Tibial artery (tissue), 4 donors: ENCODE measurements at regions of chr11 and their contacts with region 1.

Region 1: GRCh38 chr11:111229604-111230003 is 15.9 kb upstream of the POU2AF2 start:
- DNase-seq: no peak
- H3K4me3 ChIP-seq: no peak overlapping the region
- H3K27ac ChIP-seq: no peak overlapping the region
- H3K4me1 ChIP-seq: peaks cover 0 to 9% (median 0%) of the 10 kb centered on the region in 4 donors
- H3K27me3 ChIP-seq: no peaks in the 10 kb centered on the region
- CTCF ChIP-seq: no peak

Region 2: GRCh38 chr11:110711776-110712658 is 517.6 kb before region 1 on chr11 and contains the start of gene ARHGAP20:
- intact Hi-C with region 1: loop called (anchors 5 kb)
- DNase-seq: peak; percentile 69 to 83
- H3K4me3 ChIP-seq: peak within 1 kb of the TSS; percentile 60 to 67
- H3K27ac ChIP-seq: peak within 1 kb of the TSS; percentile 66 to 68
- H3K4me1 ChIP-seq: peaks cover 0 to 31% (median 20%) of the 10 kb centered on the region in 4 donors
- H3K27me3 ChIP-seq: no peaks in the 10 kb centered on the region
- CTCF ChIP-seq: no peak

Region 3: DNA sequence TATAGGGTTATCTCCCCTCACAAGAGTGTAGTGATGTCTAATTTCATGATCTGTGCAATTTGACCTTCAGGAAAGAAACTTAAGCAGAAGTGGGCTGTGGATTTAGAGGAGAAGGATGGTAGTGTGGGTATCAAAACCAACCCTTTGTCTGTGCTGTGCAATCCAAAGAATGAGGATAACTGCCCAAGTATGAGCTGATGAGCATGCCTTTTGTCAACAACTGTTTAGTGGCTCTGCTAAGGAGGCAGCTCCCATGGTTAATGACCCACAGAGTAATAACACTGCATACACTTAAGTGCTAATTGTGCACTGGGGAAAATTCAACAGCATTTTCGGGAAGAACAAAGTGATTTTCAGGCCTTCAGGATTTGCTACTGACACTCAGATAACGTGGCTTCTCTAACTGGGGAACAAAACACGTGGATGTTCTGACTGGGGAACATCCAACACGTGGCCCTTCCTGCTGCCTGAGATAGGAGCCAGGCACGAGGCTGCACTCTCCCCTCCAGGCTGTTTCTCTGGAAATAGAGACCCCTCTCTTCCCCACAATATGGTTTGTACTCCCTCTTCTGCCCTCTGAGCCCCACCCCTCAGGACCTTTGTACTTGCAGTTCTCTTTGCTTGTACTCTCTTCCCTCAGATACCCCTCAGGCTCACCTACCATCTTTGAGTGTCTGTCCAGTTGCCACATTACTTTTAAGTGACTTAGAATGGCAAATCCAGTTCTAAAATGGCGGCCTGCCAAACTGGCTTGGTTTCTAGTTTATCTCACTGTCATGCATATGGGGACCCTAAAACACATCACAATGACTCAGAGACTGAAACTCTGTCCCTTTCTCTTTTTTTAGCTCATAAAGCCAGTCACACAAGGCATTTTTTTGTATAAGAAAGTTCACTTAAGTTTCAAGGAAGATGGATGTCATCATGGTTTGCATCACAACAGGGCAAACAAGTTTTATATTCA is 218.9 kb before region 1 on chr11:
- intact Hi-C with region 1: no loop called
- DNase-seq: no peak
- H3K4me3 ChIP-seq: no peak overlapping the region
- H3K27ac ChIP-seq: no peak overlapping the region
- H3K4me1 ChIP-seq: no peaks in the 10 kb centered on the region
- H3K27me3 ChIP-seq: no peaks in the 10 kb centered on the region
- CTCF ChIP-seq: no peak

Region 4: GRCh38 chr11:111148953-111149352 is 80.7 kb before region 1 on chr11:
- intact Hi-C with region 1: no loop called
- DNase-seq: no peak
- H3K4me3 ChIP-seq: no peak overlapping the region
- H3K27ac ChIP-seq: no peak overlapping the region
- H3K4me1 ChIP-seq: no peaks in the 10 kb centered on the region
- H3K27me3 ChIP-seq: no peaks in the 10 kb centered on the region
- CTCF ChIP-seq: no peak

Region 5: GRCh38 chr11:111299101-111300026 is 69.8 kb after region 1 on chr11:
- intact Hi-C with region 1: no loop called
- DNase-seq: peak; percentile 55 to 81
- H3K4me3 ChIP-seq: peak overlapping the region; percentile 72 to 80
- H3K27ac ChIP-seq: peak overlapping the region; percentile 85 to 86
- H3K4me1 ChIP-seq: peaks cover 0 to 29% (median 10%) of the 10 kb centered on the region in 4 donors
- H3K27me3 ChIP-seq: no peaks in the 10 kb centered on the region
- CTCF ChIP-seq: peak; percentile 76 to 80